PC-3 (cell line): ENCODE measurements at regions of chr17 and their contacts with region 1.

Region 1: DNA sequence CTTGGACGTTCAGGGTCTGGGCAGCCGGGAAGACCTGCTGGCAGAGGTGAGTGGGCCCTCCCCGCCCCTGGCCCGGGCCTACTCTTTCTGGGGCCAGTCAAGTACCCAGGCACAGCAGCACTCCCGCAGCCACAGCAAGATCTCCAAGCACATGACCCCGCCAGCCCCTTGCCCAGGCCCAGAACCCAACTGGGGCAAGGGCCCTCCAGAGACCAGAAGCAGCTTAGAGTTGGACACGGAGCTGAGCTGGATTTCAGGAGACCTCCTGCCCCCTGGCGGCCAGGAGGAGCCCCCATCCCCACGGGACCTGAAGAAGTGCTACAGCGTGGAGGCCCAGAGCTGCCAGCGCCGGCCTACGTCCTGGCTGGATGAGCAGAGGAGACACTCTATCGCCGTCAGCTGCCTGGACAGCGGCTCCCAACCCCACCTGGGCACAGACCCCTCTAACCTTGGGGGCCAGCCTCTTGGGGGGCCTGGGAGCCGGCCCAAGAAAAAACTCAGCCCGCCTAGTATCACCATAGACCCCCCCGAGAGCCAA is 8.6 kb upstream of the ABCC3 start:
- DNase-seq: peak; percentile 76
- ATAC-seq: peak; percentile 61
- H3K4me3 ChIP-seq: no peak overlapping the region
- H3K27ac ChIP-seq: no peak overlapping the region
- H3K4me1 ChIP-seq: peaks cover 23% of the 10 kb centered on the region
- H3K27me3 ChIP-seq: no peaks in the 10 kb centered on the region
- CTCF ChIP-seq: peak; percentile 92

Region 2: DNA sequence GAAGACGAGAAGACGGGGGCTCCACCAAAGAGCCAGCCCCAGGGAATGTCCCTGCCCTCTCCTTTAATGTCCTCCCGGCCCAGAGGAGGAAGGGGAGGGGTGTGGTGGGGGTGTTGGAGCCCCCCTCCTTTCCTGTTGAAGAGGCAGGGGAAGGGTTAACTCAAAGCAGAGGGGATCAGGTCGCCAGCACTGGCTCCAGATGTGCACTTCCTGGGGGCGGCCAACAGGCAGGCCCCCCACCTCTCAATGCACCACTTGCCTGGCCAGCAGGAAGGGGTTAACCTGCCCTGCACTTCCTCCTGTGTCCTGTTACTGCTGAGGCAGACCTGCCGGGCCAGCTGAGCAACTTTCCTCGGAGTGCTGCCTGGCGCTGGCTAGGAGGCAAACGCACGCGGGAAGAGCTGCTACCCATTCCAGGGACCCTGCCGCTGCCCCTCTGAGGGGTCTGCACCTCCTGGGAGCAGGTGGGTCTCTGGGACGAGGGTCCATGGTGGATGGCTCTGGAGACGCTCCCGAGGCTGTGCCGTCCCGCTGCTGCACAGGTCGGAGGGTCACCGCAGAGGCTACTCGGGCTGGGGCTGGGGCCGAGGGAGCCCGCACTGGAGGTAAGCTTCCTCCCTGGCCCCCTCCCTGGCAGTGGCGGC is 93.6 kb before region 1 on chr17 and contains the start of gene EPN3:
- CTCF ChIA-PET with region 1: no interaction called
- POLR2A ChIA-PET with region 1: no interaction called
- intact Hi-C with region 1: no loop called
- DNase-seq: peak; percentile 86
- ATAC-seq: peak; percentile 53
- H3K4me3 ChIP-seq: peak within 1 kb of the TSS; percentile 78
- H3K27ac ChIP-seq: peak within 1 kb of the TSS; percentile 76
- H3K4me1 ChIP-seq: peaks cover 33% of the 10 kb centered on the region
- H3K27me3 ChIP-seq: no peaks in the 10 kb centered on the region
- CTCF ChIP-seq: no peak
- total RNA-seq, gene EPN3: 20.5 and 30.1 TPM in 2 replicates

Region 3: DNA sequence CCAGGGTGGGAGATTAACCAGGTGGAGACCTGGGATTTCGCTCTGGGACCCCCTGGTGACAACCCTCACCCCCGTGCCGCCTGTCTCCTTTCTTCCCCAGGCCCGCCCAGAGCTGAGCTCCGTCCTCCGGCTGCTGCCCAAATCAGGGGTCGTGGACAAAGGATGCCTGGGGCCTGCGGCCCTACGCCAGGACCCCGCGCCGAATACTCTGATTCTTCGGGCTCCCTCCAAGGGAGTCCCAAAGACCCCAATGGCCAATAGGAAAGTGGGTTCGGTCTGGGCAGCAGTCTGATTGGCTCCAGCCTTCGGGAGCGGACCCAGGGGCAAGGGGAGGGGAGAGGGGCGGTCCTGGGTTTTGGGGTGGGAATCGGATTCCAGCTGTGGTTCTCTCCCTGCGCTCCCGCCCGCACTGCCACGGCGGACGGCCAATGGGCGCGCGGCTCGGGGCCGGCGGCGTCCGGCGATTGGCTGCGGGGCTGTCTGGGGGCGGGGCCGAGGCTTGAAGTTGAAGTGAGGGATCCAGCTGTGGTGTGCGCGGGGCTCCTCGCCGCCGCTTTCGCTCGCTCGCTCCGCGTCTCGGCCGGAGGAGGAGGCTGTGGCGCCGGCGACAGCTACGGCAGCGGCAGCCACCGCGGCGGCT is 65.8 kb before region 1 on chr17 and contains the start of gene CACNA1G:
- CTCF ChIA-PET with region 1: no interaction called
- POLR2A ChIA-PET with region 1: no interaction called
- intact Hi-C with region 1: loop called (anchors 5 kb)
- DNase-seq: peak; percentile 88
- ATAC-seq: peak; percentile 94
- H3K4me3 ChIP-seq: peak within 1 kb of the TSS; percentile 56
- H3K27ac ChIP-seq: no peak within 1 kb of the TSS
- H3K4me1 ChIP-seq: peaks cover 12% of the 10 kb centered on the region
- H3K27me3 ChIP-seq: peaks cover 30% of the 10 kb centered on the region
- CTCF ChIP-seq: no peak
- total RNA-seq, gene CACNA1G: 0.04 and 0.12 TPM in 2 replicates

Region 4: DNA sequence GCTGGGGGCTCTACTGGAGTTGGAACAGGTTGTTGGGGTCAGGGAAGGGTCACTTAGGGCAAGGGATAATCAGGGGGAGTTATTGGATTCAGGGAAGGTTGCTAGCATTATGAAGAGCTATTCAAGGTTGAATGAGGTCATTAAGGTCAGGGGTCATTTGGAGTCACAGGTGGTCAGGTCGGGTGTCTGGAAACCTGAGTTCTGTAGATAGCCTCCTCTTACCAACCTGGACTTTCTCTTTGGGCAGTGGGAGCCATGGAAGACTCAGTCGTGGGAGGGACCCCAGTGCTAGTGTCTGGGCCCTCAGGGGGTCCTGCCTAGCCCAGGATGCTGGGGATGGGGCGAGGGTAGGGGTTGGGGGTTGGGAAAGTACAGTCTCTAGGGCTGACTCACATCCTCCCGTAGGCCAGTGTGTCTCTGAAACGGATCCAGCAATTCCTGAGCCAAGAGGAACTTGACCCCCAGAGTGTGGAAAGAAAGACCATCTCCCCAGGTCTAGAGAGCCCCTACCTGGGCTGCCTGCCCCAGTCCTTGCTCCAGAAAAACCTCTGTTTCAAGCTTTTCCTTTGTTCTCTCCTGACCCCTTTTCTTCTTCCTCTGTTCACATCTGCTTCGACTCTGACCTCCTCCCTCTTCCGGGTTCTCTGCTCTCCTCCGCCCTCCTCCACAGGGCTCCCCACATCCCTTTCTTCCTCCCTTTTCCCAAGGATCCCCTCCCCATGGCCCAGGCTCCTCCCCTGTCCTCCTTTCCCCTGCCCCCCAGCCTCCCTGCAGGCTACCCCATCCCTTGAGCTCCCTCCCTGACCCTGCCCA is 42.1 kb after region 1 on chr17:
- CTCF ChIA-PET with region 1: no interaction called
- POLR2A ChIA-PET with region 1: no interaction called
- intact Hi-C with region 1: no loop called
- DNase-seq: peak; percentile 39
- ATAC-seq: peak; percentile 47
- H3K4me3 ChIP-seq: no peak overlapping the region
- H3K27ac ChIP-seq: no peak overlapping the region
- H3K4me1 ChIP-seq: peaks cover 20% of the 10 kb centered on the region
- H3K27me3 ChIP-seq: no peaks in the 10 kb centered on the region
- CTCF ChIP-seq: no peak

Region 5: DNA sequence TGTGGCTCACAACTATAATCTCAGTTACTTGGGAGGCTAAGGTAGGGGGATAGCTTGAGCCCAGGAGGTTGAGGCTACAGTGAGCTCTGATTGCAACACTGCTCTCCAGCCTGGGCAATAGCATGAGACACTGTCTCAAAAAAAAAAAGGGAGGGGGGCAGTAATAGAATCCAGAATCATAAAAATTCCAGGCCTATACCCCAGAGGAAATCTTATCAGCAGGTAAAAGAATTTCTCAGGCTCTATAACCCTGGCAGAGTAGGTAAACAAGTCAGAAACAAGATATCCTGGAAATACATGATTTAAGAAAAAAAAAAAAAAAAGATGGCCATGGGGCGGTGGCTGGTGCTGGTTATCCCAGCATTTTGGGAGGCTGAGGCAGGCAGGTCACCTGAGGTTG is 481.7 kb after region 1 on chr17:
- CTCF ChIA-PET with region 1: no interaction called
- POLR2A ChIA-PET with region 1: no interaction called
- intact Hi-C with region 1: no loop called
- DNase-seq: no peak
- ATAC-seq: peak; percentile 14; the same call in 1 of the 2 replicates
- H3K4me3 ChIP-seq: no peak overlapping the region
- H3K27ac ChIP-seq: no peak overlapping the region
- H3K4me1 ChIP-seq: no peaks in the 10 kb centered on the region
- H3K27me3 ChIP-seq: no peaks in the 10 kb centered on the region
- CTCF ChIP-seq: no peak